ENCODE measurements at regions of chr1 and their contacts with region 1.

Region 1: GRCh38 chr1:155063550-155064110 is at the start of gene EFNA4:
- DNase-seq: peak; percentile 94
- H3K4me3 ChIP-seq: peak within 1 kb of the TSS; percentile 70 to 90 (median 86)
- H3K27ac ChIP-seq: peak within 1 kb of the TSS; percentile 75 to 84 (median 80)
- H3K4me1 ChIP-seq: peaks cover 3 to 34% (median 30%) of the 10 kb centered on the region in 4 donors
- H3K27me3 ChIP-seq: peaks cover 0 to 7% (median 0%) of the 10 kb centered on the region in 3 donors
- CTCF ChIP-seq: no peak
- EP300 ChIP-seq: no peak
- POLR2A ChIP-seq: peak in 1 of 2 donors; percentile 42
- total RNA-seq, gene EFNA4: 1.6 to 5.0 (median 3.1) TPM

Region 2: GRCh38 chr1:155044812-155045690 is 18.6 kb before region 1 on chr1:
- intact Hi-C with region 1: loop called (anchors 1 kb)
- DNase-seq: peak; percentile 85
- H3K4me3 ChIP-seq: no peak overlapping the region
- H3K27ac ChIP-seq: peak overlapping the region in 1 of 4 donors; percentile 18
- H3K4me1 ChIP-seq: peaks cover 0 to 16% (median 12%) of the 10 kb centered on the region in 4 donors
- H3K27me3 ChIP-seq: no peaks in the 10 kb centered on the region
- CTCF ChIP-seq: peak; percentile 22 to 73 (median 66)
- EP300 ChIP-seq: no peak
- POLR2A ChIP-seq: no peak

Region 3: DNA sequence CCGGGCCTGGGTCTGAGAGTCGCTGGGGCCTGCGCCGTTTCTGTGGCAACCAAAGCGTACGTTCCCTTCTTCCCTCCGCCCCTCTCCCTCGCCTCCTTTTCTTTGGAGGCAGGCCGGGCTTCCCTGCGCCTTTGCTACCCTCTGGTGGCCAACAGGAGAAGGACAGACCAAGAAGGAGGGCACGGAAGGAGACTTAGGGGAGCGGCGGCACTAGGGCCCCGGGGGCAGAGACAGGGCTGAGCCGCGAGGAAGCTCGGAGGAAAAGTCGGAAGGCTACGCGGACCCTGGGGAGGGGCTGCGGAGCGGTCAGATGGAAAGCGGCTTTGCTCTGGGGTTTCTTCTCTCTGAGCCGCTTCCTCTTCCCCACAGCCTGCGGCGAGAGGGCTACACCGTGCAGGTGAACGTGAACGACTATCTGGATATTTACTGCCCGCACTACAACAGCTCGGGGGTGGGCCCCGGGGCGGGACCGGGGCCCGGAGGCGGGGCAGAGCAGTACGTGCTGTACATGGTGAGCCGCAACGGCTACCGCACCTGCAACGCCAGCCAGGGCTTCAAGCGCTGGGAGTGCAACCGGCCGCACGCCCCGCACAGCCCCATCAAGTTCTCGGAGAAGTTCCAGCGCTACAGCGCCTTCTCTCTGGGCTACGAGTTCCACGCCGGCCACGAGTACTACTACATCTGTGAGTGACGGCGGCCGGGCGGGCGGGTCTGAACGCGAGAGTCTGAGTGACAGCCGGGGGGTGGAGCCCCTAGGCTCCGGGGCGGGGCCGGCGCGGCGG is 21.3 kb after region 1 on chr1:
- intact Hi-C with region 1: loop called (anchors 1 kb)
- DNase-seq: peak; percentile 96
- H3K4me3 ChIP-seq: peak overlapping the region; percentile 44 to 73 (median 68)
- H3K27ac ChIP-seq: peak overlapping the region; percentile 86 to 94 (median 89)
- H3K4me1 ChIP-seq: peaks cover 0 to 48% (median 46%) of the 10 kb centered on the region in 4 donors
- H3K27me3 ChIP-seq: peaks cover 38 to 46% (median 45%) of the 10 kb centered on the region in 3 donors
- CTCF ChIP-seq: peak; percentile 92 to 99 (median 96)
- EP300 ChIP-seq: peak in 1 of 4 donors; percentile 27
- POLR2A ChIP-seq: peak in 1 of 2 donors; percentile 42